Prostate gland (tissue), 2 donors: ENCODE measurements at regions of chr5 and their contacts with region 1.

Region 1: DNA sequence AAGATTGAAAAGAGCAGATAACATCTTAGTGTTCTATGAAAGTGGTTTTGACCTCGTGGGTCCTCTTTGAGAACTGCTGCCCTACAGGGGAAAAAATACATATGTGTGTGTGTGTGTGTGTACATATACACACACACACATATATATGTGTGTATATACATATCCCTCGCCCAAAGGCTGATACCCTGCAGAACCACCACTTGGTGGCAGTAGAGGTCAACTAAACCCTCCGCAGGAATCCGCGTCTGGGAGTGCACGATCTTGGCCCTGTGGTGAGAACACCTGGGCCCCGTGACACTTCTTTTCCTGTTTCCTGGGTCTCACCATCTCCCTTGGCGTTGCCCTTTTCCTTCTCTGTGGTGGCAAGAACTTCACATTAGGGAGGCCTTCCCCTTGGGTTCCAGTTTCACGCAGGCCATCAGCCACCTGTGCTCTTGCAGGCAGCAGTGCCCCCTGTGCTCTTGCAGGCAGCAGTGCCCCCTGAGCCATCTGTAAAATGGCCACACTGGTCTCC is 8.2 kb downstream of the IL9 start:
- DNase-seq: peak; percentile 63
- H3K4me3 ChIP-seq: no peak overlapping the region
- H3K27ac ChIP-seq: no peak overlapping the region
- H3K4me1 ChIP-seq: no peaks in the 10 kb centered on the region
- H3K27me3 ChIP-seq: no peaks in the 10 kb centered on the region
- CTCF ChIP-seq: peak; percentile 57 to 84 (median 77)
- POLR2A ChIP-seq: no peak

Region 2: GRCh38 chr5:136080483-136081216 is 193.2 kb after region 1 on chr5:
- intact Hi-C with region 1: loop called (anchors 5 kb)
- DNase-seq: peak; percentile 46
- H3K4me3 ChIP-seq: peak overlapping the region; percentile 5 to 11
- H3K27ac ChIP-seq: peak overlapping the region in 1 of 2 donors; percentile 40
- H3K4me1 ChIP-seq: no peaks in the 10 kb centered on the region
- H3K27me3 ChIP-seq: no peaks in the 10 kb centered on the region
- CTCF ChIP-seq: no peak
- POLR2A ChIP-seq: no peak

Region 3: GRCh38 chr5:136159457-136159856 is 272.0 kb after region 1 on chr5:
- intact Hi-C with region 1: no loop called
- DNase-seq: no peak
- H3K4me3 ChIP-seq: no peak overlapping the region
- H3K27ac ChIP-seq: no peak overlapping the region
- H3K4me1 ChIP-seq: no peaks in the 10 kb centered on the region
- H3K27me3 ChIP-seq: no peaks in the 10 kb centered on the region
- CTCF ChIP-seq: no peak
- POLR2A ChIP-seq: no peak

Region 4: DNA sequence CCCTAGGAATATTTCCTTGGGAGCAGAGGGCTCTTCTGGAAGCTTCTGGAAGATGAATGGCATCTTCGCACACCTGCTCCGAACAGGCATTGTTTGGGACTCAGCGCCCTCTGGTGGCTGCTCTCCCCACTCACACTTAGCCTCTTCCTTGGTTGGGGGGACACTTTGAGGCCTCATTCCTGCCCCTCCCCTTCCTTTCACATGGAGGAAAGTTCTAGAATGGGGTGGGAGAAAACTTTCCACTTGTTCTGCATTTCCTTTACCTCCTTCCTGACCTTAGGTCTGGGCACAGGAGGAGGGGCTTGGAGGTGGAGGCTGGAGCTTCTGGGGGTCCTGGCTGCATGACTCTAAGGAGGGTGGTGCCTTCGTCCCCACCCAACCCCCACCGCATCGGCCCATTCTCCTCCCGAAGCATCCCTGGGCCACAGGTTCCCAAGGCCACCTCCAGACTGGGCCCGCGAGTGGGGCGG is 324.9 kb after region 1 on chr5:
- intact Hi-C with region 1: loop called (anchors 5 kb)
- DNase-seq: peak; percentile 26
- H3K4me3 ChIP-seq: no peak overlapping the region
- H3K27ac ChIP-seq: no peak overlapping the region
- H3K4me1 ChIP-seq: no peaks in the 10 kb centered on the region
- H3K27me3 ChIP-seq: no peaks in the 10 kb centered on the region
- CTCF ChIP-seq: peak; percentile 71 to 89 (median 80)
- POLR2A ChIP-seq: no peak

Region 5: GRCh38 chr5:136258463-136258862 is 371.1 kb after region 1 on chr5:
- intact Hi-C with region 1: no loop called
- DNase-seq: no peak
- H3K4me3 ChIP-seq: no peak overlapping the region
- H3K27ac ChIP-seq: no peak overlapping the region
- H3K4me1 ChIP-seq: no peaks in the 10 kb centered on the region
- H3K27me3 ChIP-seq: no peaks in the 10 kb centered on the region
- CTCF ChIP-seq: no peak
- POLR2A ChIP-seq: no peak